GM18951 (cell line): ENCODE measurements at regions of chr17 and their contacts with region 1.

Region 1: DNA sequence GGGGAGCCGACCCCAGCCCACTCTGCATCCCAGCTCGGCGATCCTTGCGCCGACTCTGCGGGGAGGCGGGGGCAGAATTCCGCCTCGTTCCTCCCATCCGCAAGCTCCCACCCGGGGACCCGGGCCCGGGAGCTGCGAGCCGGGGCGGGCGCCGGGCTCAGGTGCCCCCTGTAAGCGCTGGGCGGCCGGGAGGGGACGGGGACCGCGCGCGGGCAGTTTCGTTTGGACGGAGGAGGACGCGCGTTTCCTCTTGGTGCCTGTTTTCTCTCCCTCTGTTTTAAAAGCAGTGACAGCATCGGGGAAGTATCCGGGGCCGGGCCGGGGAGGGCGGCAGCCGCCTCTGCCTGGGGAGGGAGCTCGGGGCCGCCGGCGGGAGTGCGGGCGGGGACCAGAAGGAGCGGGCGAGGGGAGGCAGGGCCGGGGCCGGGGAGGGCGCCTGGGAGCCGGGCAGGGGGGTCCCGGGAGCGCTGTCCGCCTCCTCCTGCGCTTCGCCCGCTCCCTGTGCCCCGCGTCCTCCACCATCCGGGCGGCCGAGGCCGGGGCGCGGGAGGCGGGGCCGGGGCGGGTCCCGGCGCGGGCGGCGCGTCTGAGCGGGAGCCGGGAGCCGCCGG is 57.0 kb downstream of the RAP1GAP2 start:
- POLR2A ChIP-seq: no peak

Region 2: DNA sequence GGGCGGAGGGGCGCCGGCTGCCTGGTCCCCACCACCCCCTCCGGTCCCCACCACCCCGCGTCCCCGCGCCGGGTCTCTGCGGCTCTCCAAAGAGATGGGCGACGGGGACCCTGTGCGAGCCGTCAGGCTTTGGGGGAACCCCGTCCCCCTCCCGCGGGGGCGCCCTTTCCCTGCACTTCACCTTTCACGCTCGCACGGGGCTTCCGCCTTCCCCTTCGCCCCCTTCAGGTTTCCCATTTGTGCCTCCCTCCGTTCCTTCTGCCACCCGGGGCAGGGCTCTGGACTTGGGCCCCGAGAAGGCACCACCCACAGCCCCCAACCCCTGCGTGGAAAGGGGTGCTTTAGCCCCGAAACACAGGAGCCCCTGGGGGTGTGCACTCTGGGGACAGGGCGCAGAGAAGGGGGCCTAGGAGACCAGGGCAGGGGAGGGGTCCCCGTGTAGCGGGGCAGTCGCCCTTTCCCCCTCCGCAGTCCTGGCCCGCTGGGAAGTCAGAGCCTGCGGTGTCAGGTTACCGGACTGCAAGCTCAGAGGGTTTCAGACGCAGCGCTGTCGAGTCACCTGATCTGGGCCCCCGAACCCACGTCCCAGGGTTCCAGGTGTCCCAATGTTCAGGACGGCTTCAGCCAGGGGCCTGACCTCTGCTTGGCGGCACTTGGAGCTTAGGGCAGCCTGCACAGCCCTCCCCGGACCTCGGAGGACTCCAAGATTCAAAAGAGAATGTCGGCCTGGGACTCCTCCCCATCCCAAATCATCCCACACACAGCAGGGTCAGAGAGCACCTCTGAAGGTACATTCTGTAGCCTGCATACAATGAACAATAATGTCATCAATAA is 97.1 kb before region 1 on chr17:
- in situ Hi-C with region 1: no loop called
- POLR2A ChIP-seq: no peak

Region 3: DNA sequence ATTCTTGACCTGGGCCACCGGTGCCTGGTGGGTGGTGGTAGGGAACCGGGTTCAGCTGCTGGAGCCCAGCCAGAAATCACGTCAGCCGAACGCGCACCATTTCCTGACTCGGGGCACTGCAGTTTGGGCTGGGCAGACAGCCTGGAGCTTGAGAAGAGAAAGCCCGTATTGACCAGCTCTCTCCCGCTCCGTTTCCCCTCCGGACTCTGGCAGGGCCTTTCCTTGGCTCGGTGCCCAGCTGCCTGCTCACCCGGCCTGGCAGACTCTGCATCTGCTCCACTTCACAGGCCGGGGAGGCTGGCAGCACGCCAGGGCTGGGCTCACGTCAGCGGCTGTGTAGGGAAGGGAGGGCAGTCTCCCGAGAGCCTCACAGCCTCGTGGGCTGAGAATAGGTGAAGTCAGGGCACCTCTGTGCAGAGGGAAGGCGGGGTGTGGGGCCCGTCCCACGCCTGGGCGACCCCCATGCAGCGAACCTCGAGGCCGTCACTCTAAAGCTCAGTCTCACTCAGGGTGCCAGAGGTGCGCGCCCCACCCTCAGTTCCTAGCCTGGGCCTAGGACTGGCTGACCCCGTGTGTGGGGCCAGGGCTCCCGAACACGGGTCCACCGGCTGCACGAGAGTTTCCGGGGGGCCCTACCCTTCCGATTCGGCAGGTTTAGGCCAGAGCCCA is 151.1 kb after region 1 on chr17:
- in situ Hi-C with region 1: loop called (anchors 10 kb)
- POLR2A ChIP-seq: no peak